ENCODE measurements at regions of chr6 and their contacts with region 1.

Region 1: GRCh38 chr6:56699066-56699654 is 56.5 kb upstream of the DST start:
- DNase-seq: no peak
- H3K4me3 ChIP-seq: no peak overlapping the region
- H3K27ac ChIP-seq: no peak overlapping the region
- H3K4me1 ChIP-seq: no peaks in the 10 kb centered on the region
- H3K27me3 ChIP-seq: no peaks in the 10 kb centered on the region
- CTCF ChIP-seq: peak in 3 of 6 experiments; percentile 44 to 57 (median 48)
- POLR2A ChIP-seq: no peak

Region 2: GRCh38 chr6:56637640-56638039 is 61.5 kb before region 1 on chr6:
- intact Hi-C with region 1: loop called (anchors 5 kb)
- DNase-seq: no peak
- H3K4me3 ChIP-seq: no peak overlapping the region
- H3K27ac ChIP-seq: no peak overlapping the region
- H3K4me1 ChIP-seq: no peaks in the 10 kb centered on the region
- H3K27me3 ChIP-seq: no peaks in the 10 kb centered on the region
- CTCF ChIP-seq: peak in 5 of 6 experiments; percentile 12 to 64 (median 63)
- POLR2A ChIP-seq: no peak